HEK293 (cell line): ENCODE measurements at regions of chr1 and their contacts with region 1.

Region 1: GRCh38 chr1:229258031-229258756 is 12.7 kb upstream of the RAB4A start:
- H3K4me3 ChIP-seq: no peak overlapping the region
- H3K27ac ChIP-seq: no peak overlapping the region
- H3K4me1 ChIP-seq: peaks cover 9% of the 10 kb centered on the region
- CTCF ChIP-seq: peak; percentile 80; the same call in 1 of the 2 replicates

Region 2: DNA sequence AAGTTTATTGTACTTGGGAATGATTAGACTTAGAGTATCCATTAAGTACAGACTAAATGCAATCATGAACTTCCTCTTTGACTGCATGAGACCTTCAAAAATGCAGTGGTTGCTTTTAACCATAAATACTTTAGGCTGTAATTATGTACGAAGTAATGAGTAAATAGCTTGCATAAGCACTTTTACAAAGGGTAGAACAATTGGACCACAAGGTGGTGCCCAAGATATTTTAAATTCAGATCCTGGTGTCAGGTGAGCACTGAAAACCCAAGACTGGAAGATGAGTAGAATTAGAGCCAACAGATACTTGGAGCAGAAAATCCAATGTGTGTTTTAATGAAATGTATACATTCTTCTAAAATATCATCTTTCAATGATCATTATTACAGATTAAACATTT is 566.3 kb before region 1 on chr1:
- CTCF ChIA-PET with region 1: interaction called, 72 read pairs
- POLR2A ChIA-PET with region 1: no interaction called
- H3K4me3 ChIP-seq: no peak overlapping the region
- H3K27ac ChIP-seq: no peak overlapping the region
- H3K4me1 ChIP-seq: peaks cover 7% of the 10 kb centered on the region
- CTCF ChIP-seq: peak; percentile 24; the same call in 1 of the 2 replicates

Region 3: DNA sequence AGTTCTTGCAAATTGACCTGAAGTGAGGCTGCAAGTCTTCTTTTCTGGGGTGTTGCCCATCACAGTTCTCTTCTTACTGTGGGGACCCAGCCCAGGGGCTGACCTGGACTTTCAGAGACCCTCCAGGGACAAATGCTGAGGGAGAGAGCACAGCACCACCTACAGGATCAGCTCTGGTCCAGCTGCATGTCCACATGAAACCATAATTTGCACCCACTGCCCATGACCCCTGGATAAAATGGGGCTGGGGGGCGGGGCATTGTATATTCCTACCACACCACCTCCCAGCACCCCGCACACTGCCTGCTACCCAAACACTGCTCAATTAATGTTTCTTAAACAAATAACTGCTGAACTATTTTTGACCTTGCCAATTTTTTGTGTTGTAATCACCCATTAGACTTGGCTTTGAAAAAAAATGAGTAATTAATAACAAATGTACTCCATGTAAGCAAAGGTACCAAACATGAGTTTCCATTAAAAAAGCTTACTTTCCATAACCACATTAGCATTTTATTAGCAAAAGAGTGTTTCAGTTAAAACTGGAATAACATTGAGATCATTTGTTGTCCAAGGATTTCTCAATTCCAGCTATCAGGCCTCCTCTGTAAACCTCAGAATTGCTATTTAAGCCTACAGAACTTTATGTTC is 155.3 kb before region 1 on chr1:
- CTCF ChIA-PET with region 1: no interaction called
- POLR2A ChIA-PET with region 1: no interaction called
- H3K4me3 ChIP-seq: no peak overlapping the region
- H3K27ac ChIP-seq: no peak overlapping the region
- H3K4me1 ChIP-seq: no peaks in the 10 kb centered on the region
- CTCF ChIP-seq: no peak

Region 4: DNA sequence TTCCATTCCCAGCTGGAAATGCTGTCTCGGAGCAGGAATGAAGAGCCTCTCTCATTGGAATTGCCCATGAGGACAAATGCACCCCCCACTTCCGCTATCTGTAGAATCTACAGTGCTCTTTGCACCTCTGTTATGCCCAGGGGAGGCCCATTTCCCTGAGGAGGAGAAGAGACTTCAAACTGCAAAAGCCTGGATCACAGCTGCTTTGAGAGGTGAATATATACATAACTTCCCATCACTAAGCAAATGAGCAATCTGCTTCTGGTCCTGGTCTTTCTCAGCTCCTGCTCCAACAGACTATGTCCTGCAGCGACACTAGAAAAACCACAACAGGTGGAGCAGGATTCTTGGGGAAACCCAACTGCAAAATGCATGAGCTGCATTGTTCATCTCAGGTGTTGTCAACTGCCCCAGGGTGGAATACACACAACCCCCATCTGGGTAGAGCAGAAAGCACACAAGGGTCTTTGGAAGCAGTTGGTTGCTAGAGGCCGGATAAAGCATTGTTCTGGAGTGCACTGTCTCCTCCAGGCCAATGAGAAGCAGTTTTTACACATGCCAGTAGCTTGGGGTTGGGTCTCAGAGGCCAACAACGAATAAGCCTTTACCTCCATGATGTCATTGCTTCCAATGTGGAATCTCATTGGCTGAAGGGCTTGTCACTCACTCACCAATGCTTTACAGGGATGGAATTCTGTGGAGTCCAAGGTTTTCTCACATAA is 55.0 kb before region 1 on chr1:
- CTCF ChIA-PET with region 1: no interaction called
- POLR2A ChIA-PET with region 1: no interaction called
- H3K4me3 ChIP-seq: no peak overlapping the region
- H3K27ac ChIP-seq: no peak overlapping the region
- H3K4me1 ChIP-seq: peaks cover 5% of the 10 kb centered on the region
- CTCF ChIP-seq: no peak

Region 5: DNA sequence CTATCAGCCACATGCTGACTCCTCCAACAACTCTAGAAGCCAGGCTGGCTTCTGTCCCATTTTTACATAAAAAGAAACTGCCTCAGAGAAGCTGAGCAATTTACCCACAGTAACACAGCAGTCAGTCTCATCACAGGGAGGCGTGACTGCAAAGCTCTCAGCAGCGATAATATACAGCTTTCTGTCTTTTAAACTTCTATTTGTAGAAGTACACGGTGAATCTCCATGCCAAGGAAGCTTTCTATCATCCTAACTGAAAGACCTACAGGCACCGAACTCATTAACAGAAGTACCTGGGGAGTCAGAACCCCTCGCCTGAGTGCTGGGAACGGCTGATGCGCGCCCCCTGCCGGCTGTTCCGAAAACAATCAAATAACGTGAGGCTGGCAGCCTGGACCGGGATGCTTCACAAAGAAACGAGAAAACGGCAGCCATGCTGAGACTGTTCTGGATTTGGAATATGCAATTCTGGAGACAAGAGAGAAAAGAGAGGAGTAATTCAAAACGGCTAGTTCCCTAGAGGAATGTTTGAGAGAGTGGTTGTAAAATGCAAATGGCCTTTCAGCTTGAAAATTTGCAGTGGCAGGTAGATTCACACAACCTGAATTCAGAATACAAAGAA is 30.8 kb before region 1 on chr1:
- CTCF ChIA-PET with region 1: interaction called, 115 read pairs
- POLR2A ChIA-PET with region 1: interaction called, 3 read pairs
- H3K4me3 ChIP-seq: no peak overlapping the region
- H3K27ac ChIP-seq: no peak overlapping the region; the same call in 1 of the 2 replicates
- H3K4me1 ChIP-seq: peaks cover 65% of the 10 kb centered on the region
- CTCF ChIP-seq: no peak; the same call in none of the 2 replicates

Region 6: DNA sequence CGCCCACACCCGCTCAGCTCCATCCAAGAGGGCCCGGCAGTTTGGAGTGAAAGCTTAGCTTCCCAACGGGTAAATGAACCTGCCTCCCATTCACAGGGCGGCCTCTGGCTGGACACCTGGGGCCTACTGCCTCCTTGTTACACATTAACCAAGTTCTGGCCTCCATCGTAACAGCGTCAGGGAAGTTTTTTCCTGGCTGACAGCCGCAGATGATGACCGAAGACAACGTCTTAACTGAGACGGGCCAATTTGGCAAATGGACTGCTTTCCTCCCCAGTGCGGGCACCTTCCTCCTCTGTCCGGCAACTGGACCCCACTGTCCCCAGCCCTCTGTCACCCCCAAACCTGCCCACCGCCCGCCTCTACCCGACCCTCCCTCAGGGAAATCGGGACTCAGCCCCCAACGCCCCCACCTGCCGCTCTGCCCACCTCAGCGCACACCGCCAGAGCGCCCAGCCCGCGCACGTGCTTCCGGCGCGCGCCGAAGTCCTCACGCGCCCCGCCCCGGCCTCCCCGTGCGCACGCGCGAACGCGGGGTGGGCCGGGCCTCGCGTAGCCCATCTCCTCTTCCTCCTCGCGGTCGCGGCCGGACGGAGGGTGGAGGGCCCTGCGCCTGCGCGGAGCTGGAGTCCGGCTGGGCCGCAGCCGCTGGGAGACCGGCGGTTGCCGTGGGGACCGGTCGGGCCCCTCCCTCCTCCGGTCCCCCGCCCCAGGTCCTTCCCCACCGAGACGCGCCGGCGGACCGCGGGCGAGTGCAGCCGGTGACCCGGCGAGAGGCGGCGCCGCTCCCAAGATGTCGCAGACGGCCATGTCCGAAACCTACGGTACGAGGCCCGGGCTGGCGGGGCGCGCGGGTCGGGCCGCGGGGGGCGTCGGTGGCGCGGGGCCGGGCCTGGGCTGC is 12.6 kb after region 1 on chr1 and contains the start of gene RAB4A:
- CTCF ChIA-PET with region 1: interaction called, 20 read pairs
- POLR2A ChIA-PET with region 1: interaction called, 3 read pairs
- H3K4me3 ChIP-seq: peak within 1 kb of the TSS; percentile 70
- H3K27ac ChIP-seq: peak within 1 kb of the TSS; percentile 60; the same call in 1 of the 2 replicates
- H3K4me1 ChIP-seq: peaks cover 30% of the 10 kb centered on the region
- CTCF ChIP-seq: no peak

Region 7: GRCh38 chr1:229347528-229347927 is 89.3 kb after region 1 on chr1:
- CTCF ChIA-PET with region 1: no interaction called
- POLR2A ChIA-PET with region 1: no interaction called
- H3K4me3 ChIP-seq: no peak overlapping the region
- H3K27ac ChIP-seq: no peak overlapping the region
- H3K4me1 ChIP-seq: peaks cover 4% of the 10 kb centered on the region; the same call in 1 of the 2 replicates
- CTCF ChIP-seq: no peak

Region 8: DNA sequence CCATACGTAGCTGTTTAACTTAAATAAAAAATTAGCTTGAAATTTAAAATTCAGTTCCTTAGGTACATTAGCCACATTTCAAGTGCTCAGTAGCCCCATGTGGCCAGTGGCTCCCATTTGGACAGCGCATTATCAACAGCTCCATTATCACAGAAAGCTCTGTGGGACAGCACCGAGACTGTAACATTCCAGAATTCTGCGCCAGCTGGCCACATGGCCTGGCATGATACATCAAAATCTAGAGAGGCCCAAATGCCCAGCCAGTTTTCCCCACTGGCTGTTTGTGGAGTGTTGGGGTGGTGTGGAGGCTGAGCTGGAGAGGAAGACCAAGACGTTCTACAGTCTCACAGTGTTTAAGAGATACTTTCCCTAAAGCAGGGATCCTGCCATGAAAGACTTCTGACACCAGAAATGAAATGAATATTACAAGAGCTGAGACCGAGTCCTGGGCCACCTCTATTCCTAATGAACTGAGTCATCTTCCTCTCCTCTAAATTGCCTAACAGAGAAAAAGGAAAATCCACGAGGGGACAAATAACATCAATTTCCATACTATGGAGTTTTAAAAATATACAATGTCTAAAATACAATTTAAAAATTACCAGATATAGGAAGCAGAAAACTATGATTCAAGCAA is 203.0 kb after region 1 on chr1:
- CTCF ChIA-PET with region 1: interaction called, 10 read pairs
- POLR2A ChIA-PET with region 1: no interaction called
- H3K4me3 ChIP-seq: no peak overlapping the region
- H3K27ac ChIP-seq: no peak overlapping the region
- H3K4me1 ChIP-seq: no peaks in the 10 kb centered on the region
- CTCF ChIP-seq: no peak

Region 9: DNA sequence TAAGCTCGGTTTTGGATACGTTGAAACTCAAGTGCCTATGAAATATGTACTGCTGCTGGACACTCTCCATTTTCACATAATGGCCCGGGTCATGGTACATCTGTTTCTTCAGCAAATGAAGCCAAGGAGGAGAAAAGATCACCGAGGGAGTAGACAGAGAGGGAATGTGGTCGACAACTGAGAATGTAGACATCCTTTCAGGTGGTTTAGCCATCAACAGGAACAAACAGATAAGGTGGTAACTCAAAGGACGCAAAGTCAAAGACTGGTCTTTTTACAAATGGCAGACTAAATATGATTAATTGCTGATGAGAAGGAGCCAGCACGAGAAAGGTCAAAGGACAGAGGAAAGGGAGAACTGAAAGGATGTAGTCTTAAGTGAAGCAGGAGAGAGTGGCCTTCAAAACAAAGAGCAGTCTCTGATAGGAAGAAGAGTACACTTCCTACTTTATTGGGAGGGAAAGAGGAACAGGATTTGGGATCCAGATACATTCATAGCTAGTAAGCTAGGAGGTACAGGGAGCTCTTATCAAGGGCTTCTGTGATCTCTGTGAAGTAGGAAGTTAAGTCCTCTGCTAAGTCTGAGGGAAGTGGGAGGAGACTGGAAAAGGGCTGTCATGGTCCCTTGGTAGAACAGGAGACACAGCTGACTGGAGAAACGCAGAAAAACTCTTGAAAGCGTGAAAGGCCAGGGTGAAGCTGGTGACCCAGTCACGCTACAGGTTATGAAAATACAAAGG is 221.6 kb after region 1 on chr1:
- CTCF ChIA-PET with region 1: interaction called, 138 read pairs
- POLR2A ChIA-PET with region 1: interaction called, 3 read pairs
- H3K4me3 ChIP-seq: no peak overlapping the region
- H3K27ac ChIP-seq: no peak overlapping the region
- H3K4me1 ChIP-seq: no peaks in the 10 kb centered on the region
- CTCF ChIP-seq: no peak

Region 10: DNA sequence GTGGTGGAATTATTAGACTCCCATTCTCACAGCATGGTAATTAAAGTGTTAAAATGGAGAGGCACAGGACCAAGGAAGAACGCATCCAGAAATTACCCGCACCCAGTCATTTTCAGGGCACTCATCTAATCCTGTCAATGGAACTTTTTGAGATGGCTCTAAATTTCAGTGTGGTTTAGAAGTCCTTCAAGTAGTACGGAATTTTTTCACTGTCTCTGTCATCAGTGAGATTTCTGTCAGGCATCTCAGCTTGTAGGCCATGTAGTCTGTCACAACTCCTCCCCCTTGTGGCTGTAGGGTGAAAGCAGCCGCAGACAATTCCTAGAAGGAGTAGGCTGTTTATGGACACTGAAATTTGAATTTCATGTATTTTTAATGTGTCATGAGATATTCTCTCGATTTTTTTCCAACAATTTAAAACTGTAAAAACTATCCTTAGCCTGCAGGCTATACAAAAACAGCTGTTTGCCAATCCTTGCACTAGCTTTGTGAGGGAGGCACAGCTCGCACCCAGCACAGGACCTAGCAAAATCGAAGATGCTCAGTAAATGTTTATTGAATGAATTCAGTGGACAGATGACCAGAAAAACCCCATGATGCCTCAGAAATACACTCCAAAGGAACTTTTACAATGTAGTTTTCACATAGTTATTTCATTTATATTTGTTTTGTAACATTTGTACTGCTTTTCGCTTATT is 256.5 kb after region 1 on chr1:
- CTCF ChIA-PET with region 1: interaction called, 27 read pairs
- POLR2A ChIA-PET with region 1: no interaction called
- H3K4me3 ChIP-seq: no peak overlapping the region
- H3K27ac ChIP-seq: no peak overlapping the region
- H3K4me1 ChIP-seq: no peaks in the 10 kb centered on the region
- CTCF ChIP-seq: peak; percentile 81

Region 11: GRCh38 chr1:229563701-229564100 is 305.5 kb after region 1 on chr1:
- CTCF ChIA-PET with region 1: no interaction called
- POLR2A ChIA-PET with region 1: no interaction called
- H3K4me3 ChIP-seq: no peak overlapping the region
- H3K27ac ChIP-seq: no peak overlapping the region
- H3K4me1 ChIP-seq: 0 out of 2 replicates have a peak, but pooled peaks cover 2% of the 10 kb centered on the region
- CTCF ChIP-seq: no peak